ENCODE measurements at regions of chr16 and their contacts with region 1.

Region 1: GRCh38 chr16:29007730-29008593 is 23.1 kb downstream of the LAT start:
- DNase-seq: peak; percentile 83
- H3K4me3 Mint-ChIP-seq: peak overlapping the region; percentile 44
- H3K27ac Mint-ChIP-seq: peak overlapping the region; percentile 98
- H3K4me1 Mint-ChIP-seq: peaks cover 52% of the 10 kb centered on the region
- H3K27me3 Mint-ChIP-seq: no peaks in the 10 kb centered on the region

Region 2: DNA sequence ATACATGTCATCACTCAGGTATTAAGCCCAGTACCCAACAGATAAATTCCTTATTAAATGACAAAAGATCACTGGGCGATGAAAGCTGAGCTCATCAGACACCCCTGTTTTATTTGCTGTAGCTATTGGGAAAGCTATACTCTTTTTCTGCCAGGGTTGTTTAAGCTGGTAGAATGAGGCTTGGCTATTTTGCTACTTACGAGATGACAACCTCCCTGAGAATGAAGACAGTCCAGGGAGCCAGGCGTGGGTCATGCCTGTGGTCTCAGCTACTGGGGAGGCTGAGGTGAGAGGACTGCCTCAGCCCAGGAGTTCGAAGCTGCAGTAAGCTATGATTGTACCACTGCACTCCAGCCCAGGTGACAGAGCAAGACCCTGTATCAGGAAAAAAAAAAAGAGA is 148.6 kb before region 1 on chr16:
- CTCF ChIA-PET with region 1: no interaction called
- POLR2A ChIA-PET with region 1: no interaction called
- DNase-seq: no peak
- H3K4me3 Mint-ChIP-seq: no peak overlapping the region
- H3K27ac Mint-ChIP-seq: no peak overlapping the region
- H3K4me1 Mint-ChIP-seq: peaks cover 17% of the 10 kb centered on the region
- H3K27me3 Mint-ChIP-seq: no peaks in the 10 kb centered on the region

Region 3: DNA sequence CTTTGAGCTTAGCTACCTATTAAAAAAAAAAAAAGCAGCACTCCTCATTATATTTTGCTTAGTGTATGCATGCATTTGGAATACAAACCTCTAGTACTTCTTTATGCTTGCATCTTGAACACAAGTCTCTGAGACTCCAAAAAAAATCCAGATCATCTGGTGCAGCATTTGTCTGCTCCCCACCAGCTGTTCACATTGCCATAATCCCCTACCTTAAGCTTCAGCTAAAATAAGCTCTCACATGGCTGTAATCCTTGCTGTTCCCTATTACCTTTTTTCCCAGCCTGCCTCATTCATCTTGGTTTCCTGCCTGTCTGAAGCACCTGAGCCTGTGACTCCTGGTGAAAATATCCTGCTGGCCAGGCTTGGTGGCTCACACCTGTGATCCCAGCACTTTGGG is 64.7 kb before region 1 on chr16:
- CTCF ChIA-PET with region 1: no interaction called
- POLR2A ChIA-PET with region 1: no interaction called
- DNase-seq: no peak
- H3K4me3 Mint-ChIP-seq: no peak overlapping the region
- H3K27ac Mint-ChIP-seq: no peak overlapping the region
- H3K4me1 Mint-ChIP-seq: peaks cover 25% of the 10 kb centered on the region
- H3K27me3 Mint-ChIP-seq: peaks cover 3% of the 10 kb centered on the region

Region 4: DNA sequence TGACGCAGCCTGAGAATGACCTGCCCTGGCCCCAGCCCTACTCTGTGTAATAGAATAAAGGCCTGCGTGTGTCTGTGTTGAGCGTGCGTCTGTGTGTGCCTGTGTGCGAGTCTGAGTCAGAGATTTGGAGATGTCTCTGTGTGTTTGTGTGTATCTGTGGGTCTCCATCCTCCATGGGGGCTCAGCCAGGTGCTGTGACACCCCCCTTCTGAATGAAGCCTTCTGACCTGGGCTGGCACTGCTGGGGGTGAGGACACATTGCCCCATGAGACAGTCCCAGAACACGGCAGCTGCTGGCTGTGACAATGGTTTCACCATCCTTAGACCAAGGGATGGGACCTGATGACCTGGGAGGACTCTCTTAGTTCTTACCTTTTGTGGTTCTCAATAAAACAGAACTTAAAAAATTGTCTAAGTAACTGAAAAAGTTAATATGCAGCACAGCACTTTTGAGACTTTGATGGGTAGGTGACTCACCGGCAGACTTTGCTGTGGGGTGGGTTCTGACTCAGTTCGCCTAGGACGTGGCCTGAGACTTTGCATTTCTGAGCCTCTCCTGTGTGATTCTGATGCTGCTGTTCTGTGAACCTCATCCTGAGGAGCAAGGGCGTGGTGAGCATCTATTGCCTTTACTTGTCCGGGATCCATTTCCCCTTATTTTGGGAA is 17.5 kb before region 1 on chr16:
- CTCF ChIA-PET with region 1: interaction called, 11 read pairs
- POLR2A ChIA-PET with region 1: no interaction called
- DNase-seq: peak; percentile 51
- H3K4me3 Mint-ChIP-seq: peak overlapping the region; percentile 100
- H3K27ac Mint-ChIP-seq: peak overlapping the region; percentile 86
- H3K4me1 Mint-ChIP-seq: peaks cover 53% of the 10 kb centered on the region
- H3K27me3 Mint-ChIP-seq: no peaks in the 10 kb centered on the region

Measured in activated CD4-positive, alpha-beta T cell treated with anti-CD3 and anti-CD28 coated beads, Interleukin-2, amount 10 ng/mL, durations not matched to agents 7 days and 5 days (primary cell).